Activated T-helper 1 cell treated with anti-CD3 and anti-CD28 coated beads, Interleukin-12 subunit alpha, Interleukin-12 subunit beta, Interleukin-2, Interleukin-4 antibody, amounts not matched to agents 30 ng/mL and 10 ng/mL and 1 ng/mL, durations not matched to agents 14 hours and 24 hours and 36 hours (primary cell): ENCODE measurements at regions of chr14 and their contacts with region 1.

Region 1: DNA sequence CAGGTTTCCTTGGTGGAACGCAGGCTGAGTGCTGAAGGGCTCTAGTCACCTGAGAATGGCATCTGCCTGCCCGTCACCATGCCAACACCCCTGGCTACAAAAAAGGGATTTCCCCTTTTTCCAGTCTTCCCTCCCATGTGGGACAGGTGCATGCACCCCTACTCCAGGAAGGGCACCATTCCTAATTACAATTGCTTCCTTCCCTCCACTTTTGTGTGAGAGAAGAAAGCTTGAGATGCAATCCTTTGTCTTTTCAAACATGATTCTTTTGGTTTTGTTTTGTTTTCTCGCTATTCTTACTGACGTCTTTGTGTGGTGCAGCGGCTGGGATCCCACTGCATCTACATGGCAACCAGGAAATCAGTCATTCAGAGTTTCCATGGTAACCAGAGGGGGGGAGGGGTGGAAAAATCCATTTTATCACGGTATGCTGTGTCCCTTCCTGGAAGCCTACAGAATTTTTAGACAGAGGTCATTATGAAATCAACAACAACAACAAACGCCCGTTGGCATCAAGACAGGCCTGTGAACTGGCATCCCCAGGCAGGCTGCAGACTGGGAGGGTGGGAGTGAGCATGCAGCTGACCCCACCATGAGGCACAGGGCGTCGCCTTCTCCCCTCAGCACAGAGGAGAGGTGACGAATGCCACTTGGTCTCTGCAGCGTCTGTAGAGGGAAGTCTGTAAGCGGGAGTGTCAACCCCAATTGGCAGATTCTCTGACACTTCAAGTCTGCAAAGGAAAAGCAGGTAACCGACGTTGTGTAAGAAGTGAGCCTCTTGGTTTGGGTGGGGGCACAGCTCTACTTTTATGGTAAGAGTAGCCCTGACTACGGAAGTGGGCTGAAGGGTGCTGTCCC is 13.6 kb upstream of the GNG2 start:
- DNase-seq: peak; percentile 86
- H3K4me3 Mint-ChIP-seq: peak overlapping the region; percentile 85
- H3K27ac Mint-ChIP-seq: peak overlapping the region; percentile 98
- H3K4me1 Mint-ChIP-seq: peaks cover 60% of the 10 kb centered on the region
- H3K27me3 Mint-ChIP-seq: no peaks in the 10 kb centered on the region

Region 2: GRCh38 chr14:51260225-51260624 is 586.6 kb before region 1 on chr14:
- intact Hi-C with region 1: loop called (anchors 1 kb)
- DNase-seq: no peak
- H3K4me3 Mint-ChIP-seq: no peak overlapping the region
- H3K27ac Mint-ChIP-seq: peak overlapping the region; percentile 79
- H3K4me1 Mint-ChIP-seq: peaks cover 20% of the 10 kb centered on the region
- H3K27me3 Mint-ChIP-seq: no peaks in the 10 kb centered on the region

Region 3: GRCh38 chr14:51780006-51780692 is 66.7 kb before region 1 on chr14:
- intact Hi-C with region 1: loop called (anchors 5 kb)
- DNase-seq: peak; percentile 56
- H3K4me3 Mint-ChIP-seq: no peak overlapping the region
- H3K27ac Mint-ChIP-seq: no peak overlapping the region
- H3K4me1 Mint-ChIP-seq: peaks cover 9% of the 10 kb centered on the region
- H3K27me3 Mint-ChIP-seq: peaks cover 25% of the 10 kb centered on the region

Region 4: GRCh38 chr14:51865953-51866747 is 19.3 kb after region 1 on chr14:
- intact Hi-C with region 1: loop called (anchors 1 kb)
- DNase-seq: no peak
- H3K4me3 Mint-ChIP-seq: no peak overlapping the region
- H3K27ac Mint-ChIP-seq: no peak overlapping the region
- H3K4me1 Mint-ChIP-seq: peaks cover 39% of the 10 kb centered on the region
- H3K27me3 Mint-ChIP-seq: no peaks in the 10 kb centered on the region

Region 5: GRCh38 chr14:51929906-51930682 is 83.2 kb after region 1 on chr14:
- intact Hi-C with region 1: loop called (anchors 1 kb)
- DNase-seq: no peak
- H3K4me3 Mint-ChIP-seq: no peak overlapping the region
- H3K27ac Mint-ChIP-seq: peak overlapping the region; percentile 91
- H3K4me1 Mint-ChIP-seq: peaks cover 54% of the 10 kb centered on the region
- H3K27me3 Mint-ChIP-seq: no peaks in the 10 kb centered on the region

Region 6: GRCh38 chr14:52325126-52325525 is 478.3 kb after region 1 on chr14:
- intact Hi-C with region 1: loop called (anchors 5 kb)
- DNase-seq: peak; percentile 52
- H3K4me3 Mint-ChIP-seq: peak overlapping the region; percentile 77
- H3K27ac Mint-ChIP-seq: peak overlapping the region; percentile 62
- H3K4me1 Mint-ChIP-seq: peaks cover 90% of the 10 kb centered on the region
- H3K27me3 Mint-ChIP-seq: no peaks in the 10 kb centered on the region